ENCODE measurements at regions of chr3 and their contacts with region 1.

Region 1: DNA sequence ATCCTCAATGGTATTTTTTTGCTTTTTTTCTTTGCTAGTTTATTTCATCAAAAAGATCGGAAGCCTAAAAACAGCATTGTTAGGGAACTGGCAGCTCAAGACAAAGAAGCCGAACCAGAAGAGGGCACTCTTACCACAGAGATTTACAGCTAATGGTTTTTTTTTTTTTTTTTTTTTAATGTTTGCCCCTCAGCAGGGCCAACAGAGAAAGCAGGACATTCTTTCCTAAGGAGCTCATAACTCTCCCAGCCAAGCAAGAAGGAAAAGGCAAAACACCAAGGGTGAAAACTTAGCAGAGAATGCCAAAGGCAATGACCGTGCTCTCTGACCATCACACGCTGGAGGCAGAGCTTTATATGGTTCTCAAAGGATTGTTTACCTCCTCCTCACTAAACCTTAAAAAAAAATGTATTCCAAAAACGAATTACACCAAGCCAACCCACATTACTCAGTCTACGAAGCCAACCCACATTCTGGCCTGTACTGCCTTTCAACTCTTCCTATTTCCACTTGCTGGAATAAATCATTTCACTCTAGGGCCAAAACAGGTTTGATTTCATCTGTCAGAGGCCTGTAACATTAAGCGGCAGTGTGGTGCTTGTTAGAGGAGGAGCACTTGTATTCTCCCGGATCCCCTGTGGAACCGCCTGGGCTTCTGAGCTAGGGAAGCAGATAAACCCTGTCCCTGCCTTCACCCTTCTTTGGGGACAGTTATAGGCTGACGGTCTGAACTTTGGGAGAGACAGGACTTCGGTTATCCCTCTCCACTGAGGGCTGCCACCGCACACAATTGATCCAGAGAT is 35.6 kb upstream of the GYG1 start:
- DNase-seq: peak; percentile 40
- ATAC-seq: no peak
- H3K4me3 ChIP-seq: no peak overlapping the region
- H3K4me3 Mint-ChIP-seq: no peak overlapping the region
- H3K27ac ChIP-seq: no peak overlapping the region
- H3K27ac Mint-ChIP-seq: no peak overlapping the region
- H3K4me1 ChIP-seq: no peaks in the 10 kb centered on the region
- H3K4me1 Mint-ChIP-seq: no peaks in the 10 kb centered on the region
- H3K27me3 ChIP-seq: no peaks in the 10 kb centered on the region
- H3K27me3 Mint-ChIP-seq: peaks cover 8% of the 10 kb centered on the region
- CTCF ChIP-seq: peak; percentile 50

Region 2: DNA sequence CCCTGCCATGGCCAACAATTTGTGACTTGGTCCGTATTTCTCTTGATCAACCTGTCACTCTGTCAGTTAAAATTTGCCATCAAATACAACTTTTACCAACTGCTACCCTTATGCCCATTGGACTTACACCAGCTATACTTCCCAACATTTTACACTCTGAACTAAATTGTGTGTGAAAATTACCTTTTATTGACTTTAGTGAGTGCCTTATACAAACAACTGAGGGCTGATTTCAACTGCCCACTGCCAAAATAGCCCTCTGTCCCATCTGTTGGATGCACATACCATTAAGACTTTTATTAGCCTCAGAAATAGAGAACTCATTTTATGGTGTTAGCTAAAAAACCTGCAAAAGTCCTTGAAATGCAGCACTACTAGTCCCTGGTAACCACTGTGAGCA is 141.8 kb before region 1 on chr3:
- CTCF ChIA-PET with region 1: no interaction called
- POLR2A ChIA-PET with region 1: no interaction called
- intact Hi-C with region 1: no loop called
- DNase-seq: no peak
- ATAC-seq: no peak
- H3K4me3 ChIP-seq: no peak overlapping the region
- H3K4me3 Mint-ChIP-seq: no peak overlapping the region
- H3K27ac ChIP-seq: no peak overlapping the region
- H3K27ac Mint-ChIP-seq: no peak overlapping the region
- H3K4me1 ChIP-seq: no peaks in the 10 kb centered on the region
- H3K4me1 Mint-ChIP-seq: no peaks in the 10 kb centered on the region
- H3K27me3 ChIP-seq: no peaks in the 10 kb centered on the region
- H3K27me3 Mint-ChIP-seq: peaks cover 3% of the 10 kb centered on the region
- CTCF ChIP-seq: no peak

Region 3: DNA sequence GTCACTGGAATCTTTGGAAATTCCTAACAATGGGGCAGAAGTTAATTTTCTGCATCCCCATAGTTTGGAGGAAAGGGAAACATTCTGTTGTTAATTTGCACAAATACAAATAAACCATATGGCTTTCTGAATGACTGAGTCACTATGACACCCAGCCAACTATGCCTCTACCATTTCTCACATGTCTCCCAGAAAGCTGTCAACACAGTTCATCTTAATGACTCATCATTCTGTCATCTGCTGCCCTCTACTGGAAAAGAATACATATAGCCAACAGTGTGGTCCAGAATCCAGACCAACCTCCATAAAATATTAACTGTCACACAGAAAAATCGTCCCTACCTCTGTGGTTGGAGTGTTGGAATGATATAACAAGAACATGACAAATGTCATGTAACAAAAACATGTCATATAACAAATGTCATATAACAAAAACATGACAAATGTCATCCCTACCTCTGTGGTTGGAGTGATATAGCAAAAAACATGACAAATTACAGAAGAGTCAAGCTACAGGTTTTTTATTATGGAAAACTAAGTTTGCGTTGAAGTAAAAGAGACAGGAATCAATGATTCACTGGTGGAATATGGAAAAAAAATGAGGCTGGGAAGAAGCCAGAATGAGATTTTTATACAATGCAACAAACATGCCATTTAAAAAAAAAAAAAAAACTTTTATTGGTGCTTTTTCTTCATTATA is 12.1 kb before region 1 on chr3:
- CTCF ChIA-PET with region 1: interaction called, 26 read pairs
- POLR2A ChIA-PET with region 1: no interaction called
- intact Hi-C with region 1: no loop called
- DNase-seq: peak; percentile 39
- ATAC-seq: peak; percentile 73
- H3K4me3 ChIP-seq: no peak overlapping the region
- H3K4me3 Mint-ChIP-seq: no peak overlapping the region
- H3K27ac ChIP-seq: no peak overlapping the region
- H3K27ac Mint-ChIP-seq: no peak overlapping the region
- H3K4me1 ChIP-seq: no peaks in the 10 kb centered on the region
- H3K4me1 Mint-ChIP-seq: no peaks in the 10 kb centered on the region
- H3K27me3 ChIP-seq: no peaks in the 10 kb centered on the region
- H3K27me3 Mint-ChIP-seq: peaks cover 15% of the 10 kb centered on the region
- CTCF ChIP-seq: peak; percentile 70

Region 4: GRCh38 chr3:148971401-148972163 is 15.8 kb after region 1 on chr3:
- CTCF ChIA-PET with region 1: interaction called, 13 read pairs
- POLR2A ChIA-PET with region 1: no interaction called
- intact Hi-C with region 1: no loop called
- DNase-seq: no peak
- ATAC-seq: no peak
- H3K4me3 ChIP-seq: no peak overlapping the region
- H3K4me3 Mint-ChIP-seq: no peak overlapping the region
- H3K27ac ChIP-seq: no peak overlapping the region
- H3K27ac Mint-ChIP-seq: no peak overlapping the region
- H3K4me1 ChIP-seq: no peaks in the 10 kb centered on the region
- H3K4me1 Mint-ChIP-seq: peaks cover 2% of the 10 kb centered on the region
- H3K27me3 ChIP-seq: no peaks in the 10 kb centered on the region
- H3K27me3 Mint-ChIP-seq: peaks cover 3% of the 10 kb centered on the region
- CTCF ChIP-seq: no peak

Region 5: GRCh38 chr3:149023951-149024350 is 68.2 kb after region 1 on chr3:
- CTCF ChIA-PET with region 1: no interaction called
- POLR2A ChIA-PET with region 1: no interaction called
- intact Hi-C with region 1: no loop called
- DNase-seq: no peak
- ATAC-seq: no peak
- H3K4me3 ChIP-seq: no peak overlapping the region
- H3K4me3 Mint-ChIP-seq: no peak overlapping the region
- H3K27ac ChIP-seq: no peak overlapping the region
- H3K27ac Mint-ChIP-seq: no peak overlapping the region
- H3K4me1 ChIP-seq: no peaks in the 10 kb centered on the region
- H3K4me1 Mint-ChIP-seq: no peaks in the 10 kb centered on the region
- H3K27me3 ChIP-seq: no peaks in the 10 kb centered on the region
- H3K27me3 Mint-ChIP-seq: no peaks in the 10 kb centered on the region
- CTCF ChIP-seq: no peak

Region 6: DNA sequence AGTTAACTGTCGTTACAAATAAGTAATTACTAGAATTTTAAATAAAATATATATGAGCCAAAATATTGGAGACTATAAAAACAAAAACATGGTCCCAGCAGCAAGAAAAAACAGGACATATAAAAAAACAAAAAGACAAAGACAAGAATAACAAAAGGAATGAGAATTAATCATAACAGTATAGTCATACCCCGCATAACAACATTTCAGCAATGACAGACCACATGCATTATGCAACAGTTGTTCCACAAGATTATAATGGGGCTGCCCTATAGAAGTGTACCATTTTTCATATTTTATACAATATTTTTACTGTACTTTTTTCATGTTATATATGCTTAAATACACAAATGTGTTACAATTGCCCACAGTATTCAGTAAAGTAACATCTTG is 125.0 kb after region 1 on chr3:
- CTCF ChIA-PET with region 1: no interaction called
- POLR2A ChIA-PET with region 1: no interaction called
- intact Hi-C with region 1: no loop called
- DNase-seq: no peak
- ATAC-seq: no peak
- H3K4me3 ChIP-seq: no peak overlapping the region
- H3K4me3 Mint-ChIP-seq: no peak overlapping the region
- H3K27ac ChIP-seq: no peak overlapping the region
- H3K27ac Mint-ChIP-seq: no peak overlapping the region
- H3K4me1 ChIP-seq: peaks cover 7 to 8% of the 10 kb centered on the region in 2 donors
- H3K4me1 Mint-ChIP-seq: peaks cover 9% of the 10 kb centered on the region
- H3K27me3 ChIP-seq: no peaks in the 10 kb centered on the region
- H3K27me3 Mint-ChIP-seq: no peaks in the 10 kb centered on the region
- CTCF ChIP-seq: no peak

Region 7: DNA sequence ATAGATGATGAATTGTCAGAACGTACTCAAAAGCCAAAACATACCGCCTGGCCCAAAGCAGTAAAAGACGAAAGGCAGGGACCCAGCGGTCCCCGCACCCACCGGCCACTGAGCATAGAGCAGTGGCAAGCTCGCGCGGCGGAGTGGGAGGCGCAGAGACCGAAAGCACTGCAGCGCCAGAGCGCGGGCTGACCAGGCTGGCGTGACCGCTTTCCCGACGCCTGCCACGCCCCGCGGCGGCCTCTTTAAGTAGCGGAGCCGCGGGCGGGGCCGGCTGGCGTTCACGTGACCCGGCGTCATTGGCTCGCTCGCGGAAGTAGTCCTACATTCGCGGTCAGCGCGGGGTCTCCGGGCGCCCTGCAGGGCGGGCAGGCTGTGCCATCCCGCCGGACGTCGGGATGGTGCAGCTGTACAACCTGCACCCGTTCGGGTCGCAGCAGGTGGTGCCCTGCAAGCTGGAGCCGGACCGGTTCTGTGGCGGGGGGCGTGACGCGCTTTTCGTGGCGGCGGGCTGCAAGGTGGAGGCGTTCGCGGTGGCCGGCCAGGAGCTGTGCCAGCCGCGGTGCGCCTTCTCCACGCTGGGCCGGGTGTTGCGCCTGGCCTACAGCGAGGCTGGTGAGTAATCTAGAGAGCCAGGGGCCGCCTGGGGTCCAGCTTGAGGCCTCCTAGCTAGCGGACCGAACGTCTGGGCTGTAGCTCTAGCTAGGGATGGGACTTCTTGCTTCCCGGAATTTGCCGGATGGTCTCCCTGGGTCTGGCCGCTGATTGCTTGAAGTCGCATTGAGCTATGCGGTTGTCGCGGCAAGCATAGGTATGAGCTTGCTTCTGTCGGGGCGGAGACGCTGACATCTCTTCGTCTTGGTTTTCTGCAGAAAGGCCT is 173.8 kb after region 1 on chr3 and contains the start of gene HPS3:
- CTCF ChIA-PET with region 1: no interaction called
- POLR2A ChIA-PET with region 1: no interaction called
- intact Hi-C with region 1: no loop called
- DNase-seq: peak; percentile 93
- ATAC-seq: peak; percentile 94
- H3K4me3 ChIP-seq: peak within 1 kb of the TSS; percentile 91 to 98 (median 97)
- H3K4me3 Mint-ChIP-seq: peak within 1 kb of the TSS; percentile 90
- H3K27ac ChIP-seq: peak within 1 kb of the TSS; percentile 52 to 82
- H3K27ac Mint-ChIP-seq: peak within 1 kb of the TSS; percentile 87
- H3K4me1 ChIP-seq: peaks cover 32 to 39% of the 10 kb centered on the region in 2 donors
- H3K4me1 Mint-ChIP-seq: peaks cover 47% of the 10 kb centered on the region
- H3K27me3 ChIP-seq: no peaks in the 10 kb centered on the region
- H3K27me3 Mint-ChIP-seq: no peaks in the 10 kb centered on the region
- CTCF ChIP-seq: no peak
- total RNA-seq, gene HPS3: 48.1 and 53.0 TPM in 2 replicates